Gastrocnemius medialis (tissue), 4 donors: ENCODE measurements at regions of chr1 and their contacts with region 1.

Region 1: DNA sequence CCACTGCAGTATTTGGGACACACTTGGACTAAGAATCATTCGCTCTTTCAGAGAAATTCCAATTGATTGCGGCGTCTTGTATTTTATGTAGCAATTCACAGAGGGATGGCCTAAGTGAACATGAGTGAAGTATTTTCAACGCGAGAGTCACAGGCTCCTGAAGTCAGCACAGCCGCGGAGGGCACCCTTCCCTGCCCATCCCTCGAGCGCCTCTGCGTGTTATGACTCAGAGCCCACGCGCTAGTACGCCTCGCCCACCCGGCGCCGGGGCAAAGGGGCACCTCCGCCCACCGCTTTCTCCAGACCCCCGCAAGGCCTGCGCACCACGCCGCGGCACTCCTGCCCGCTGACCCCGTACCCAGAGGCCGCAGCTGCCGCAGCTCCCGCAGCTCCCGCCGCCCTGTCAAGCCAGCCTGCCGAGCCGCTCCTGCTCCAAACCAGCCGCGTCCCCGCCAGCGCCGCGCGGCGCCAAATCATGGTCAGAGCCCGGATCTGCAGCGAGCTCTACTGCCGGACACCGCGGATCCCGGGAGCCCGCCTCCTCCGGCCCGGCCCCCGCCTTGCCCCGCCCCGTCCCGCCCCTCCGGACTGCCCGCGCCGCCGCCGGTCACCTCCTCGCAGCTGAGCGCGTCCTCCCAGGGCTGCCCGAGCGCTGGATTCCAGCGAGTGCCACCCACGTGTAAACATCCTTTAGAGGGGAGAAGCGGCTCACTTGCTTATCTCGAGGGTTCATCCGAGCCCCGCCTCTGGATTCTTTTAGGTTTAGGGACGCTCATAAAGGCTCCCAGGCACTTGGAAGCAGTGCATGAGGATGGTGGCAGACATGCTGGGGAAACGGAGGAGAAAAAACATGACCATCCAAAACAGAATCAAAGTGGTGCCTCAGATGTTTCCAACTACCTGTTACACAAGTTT is at the start of gene GLRX2:
- DNase-seq: peak; percentile 82 to 88
- ATAC-seq: peak; percentile 90 to 92
- H3K4me3 ChIP-seq: peak within 1 kb of the TSS; percentile 60 to 81 (median 70)
- H3K27ac ChIP-seq: peak within 1 kb of the TSS; percentile 89 to 97 (median 95)
- H3K4me1 ChIP-seq: peaks cover 15 to 30% of the 10 kb centered on the region in 2 donors
- H3K27me3 ChIP-seq: no peaks in the 10 kb centered on the region
- CTCF ChIP-seq: peak in 2 of 5 experiments; percentile 5 to 20
- POLR2A ChIP-seq: peak; percentile 90 to 93
- total RNA-seq, gene GLRX2: 11.9 to 42.8 (median 20.7) TPM

Region 2: DNA sequence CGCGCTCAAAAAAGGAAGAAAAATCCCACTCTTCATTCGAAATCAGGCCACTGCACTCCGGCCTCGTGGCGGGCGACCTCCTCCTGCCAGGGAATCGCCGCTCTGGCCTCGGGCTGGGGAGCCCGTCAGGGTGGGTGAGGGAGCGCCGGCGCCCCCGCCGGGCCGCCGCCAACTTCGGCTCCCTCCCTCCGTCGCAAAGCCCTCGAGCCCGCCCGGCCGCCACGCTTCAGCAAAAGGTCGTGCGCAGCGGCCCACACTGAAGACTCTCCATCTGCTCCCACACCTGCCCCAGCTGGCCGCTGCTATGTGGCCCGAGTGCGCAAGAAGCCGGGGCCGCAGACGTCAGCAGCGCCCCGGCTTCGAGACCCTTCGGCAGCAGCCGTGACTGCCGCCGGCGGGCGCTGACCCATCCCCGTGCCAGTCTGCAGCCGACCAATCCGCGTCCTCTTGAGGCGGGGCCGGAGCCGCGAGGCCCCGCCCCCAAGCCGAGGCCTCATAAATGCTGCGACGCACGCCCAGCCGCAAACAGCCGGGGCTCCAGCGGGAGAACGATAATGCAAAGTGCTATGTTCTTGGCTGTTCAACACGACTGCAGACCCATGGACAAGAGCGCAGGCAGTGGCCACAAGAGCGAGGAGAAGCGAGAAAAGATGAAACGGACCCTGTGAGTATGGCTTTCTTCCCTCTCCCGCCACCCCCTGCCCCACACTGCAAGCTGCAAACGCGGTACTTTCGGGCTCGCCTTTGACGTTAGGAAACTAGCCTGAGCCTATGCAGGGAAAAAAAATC is 296.5 kb before region 1 on chr1 and contains the start of gene RGS2:
- in situ Hi-C with region 1: loop called in 2 of 4 experiments (anchors 25 kb)
- intact Hi-C with region 1: loop called (anchors 5 kb)
- DNase-seq: peak; percentile 80 to 86
- ATAC-seq: peak; percentile 93
- H3K4me3 ChIP-seq: peak within 1 kb of the TSS; percentile 73 to 87 (median 80)
- H3K27ac ChIP-seq: peak within 1 kb of the TSS; percentile 73 to 88 (median 82)
- H3K4me1 ChIP-seq: peaks cover 12 to 19% of the 10 kb centered on the region in 2 donors
- H3K27me3 ChIP-seq: no peaks in the 10 kb centered on the region
- CTCF ChIP-seq: peak in 1 of 5 experiments; percentile 12
- POLR2A ChIP-seq: peak; percentile 88 to 98
- total RNA-seq, gene RGS2: 1.2 to 14.6 (median 5.8) TPM

Region 3: DNA sequence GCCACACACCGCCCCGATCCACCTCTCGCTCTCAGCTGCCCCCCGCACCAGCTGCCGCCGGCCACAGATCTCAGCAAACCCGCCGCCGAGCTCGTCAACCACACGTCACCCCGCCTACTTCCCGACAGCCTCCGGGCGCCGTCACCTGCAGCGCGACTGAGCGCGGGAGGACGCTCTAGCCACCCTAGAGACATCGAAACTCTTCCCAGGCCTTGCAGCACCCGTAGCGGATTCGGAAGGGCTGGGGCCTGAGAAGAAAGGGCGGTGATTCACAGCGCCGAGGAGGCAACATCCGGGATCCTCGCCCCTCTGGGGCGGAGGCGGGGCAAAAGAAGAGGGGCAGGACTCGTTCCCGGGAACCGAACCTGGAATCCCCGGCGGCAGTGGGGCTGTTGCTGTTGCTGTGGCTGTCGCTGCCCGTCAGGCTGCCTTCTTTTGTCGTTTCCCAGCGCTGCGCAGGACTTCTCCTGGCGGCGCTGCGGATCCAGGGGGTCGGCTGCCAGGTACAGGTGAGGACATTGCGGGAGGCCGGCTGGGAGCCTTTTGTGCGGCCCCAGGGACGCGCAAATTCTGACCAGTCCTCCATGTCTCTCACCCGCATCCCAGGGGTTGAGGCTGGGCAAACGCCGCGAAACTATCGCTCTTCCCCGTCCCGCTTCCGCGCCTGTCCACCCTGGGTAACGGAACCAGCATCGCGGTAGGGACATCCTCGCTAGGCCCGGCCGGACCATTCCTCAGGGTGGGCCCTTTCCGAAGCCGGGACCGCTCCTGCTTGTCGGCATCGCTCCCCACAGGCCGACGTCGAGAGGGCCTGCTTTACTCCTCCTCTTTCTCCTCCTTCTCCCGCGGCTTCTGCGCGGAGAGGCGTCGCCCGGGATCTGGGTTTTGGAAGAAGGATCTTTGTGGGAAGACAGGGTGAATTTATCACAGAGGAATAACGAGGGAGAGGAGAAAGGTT is 45.6 kb before region 1 on chr1 and contains the starts of genes RO60 and UCHL5:
- in situ Hi-C with region 1: no loop called
- intact Hi-C with region 1: loop called (anchors 1 kb)
- DNase-seq: peak; percentile 93 to 97
- ATAC-seq: peak; percentile 94 to 95
- H3K4me3 ChIP-seq: peak within 1 kb of the TSS; percentile 80 to 97 (median 90)
- H3K27ac ChIP-seq: peak within 1 kb of the TSS; percentile 96 to 98 (median 98)
- H3K4me1 ChIP-seq: peaks cover 36 to 44% of the 10 kb centered on the region in 2 donors
- H3K27me3 ChIP-seq: no peaks in the 10 kb centered on the region
- CTCF ChIP-seq: peak in 2 of 5 experiments; percentile 12 to 22
- POLR2A ChIP-seq: peak; percentile 87 to 91
- total RNA-seq, gene RO60: 56.1 to 74.0 (median 58.2) TPM
- total RNA-seq, gene UCHL5: 26.0 to 40.6 (median 30.7) TPM

Region 4: GRCh38 chr1:193121616-193122593 is 16.7 kb after region 1 on chr1 and contains the start of gene CDC73:
- in situ Hi-C with region 1: no loop called
- intact Hi-C with region 1: loop called (anchors 1 kb)
- DNase-seq: peak; percentile 96
- ATAC-seq: peak; percentile 95 to 97
- H3K4me3 ChIP-seq: peak within 1 kb of the TSS; percentile 74 to 87 (median 82)
- H3K27ac ChIP-seq: peak within 1 kb of the TSS; percentile 89 to 96 (median 94)
- H3K4me1 ChIP-seq: peaks cover 24 to 25% of the 10 kb centered on the region in 2 donors
- H3K27me3 ChIP-seq: no peaks in the 10 kb centered on the region
- CTCF ChIP-seq: peak; percentile 92 to 99 (median 98)
- POLR2A ChIP-seq: peak; percentile 79 to 85
- total RNA-seq, gene CDC73: 12.3 to 23.7 (median 17.4) TPM